ENCODE measurements at regions of chr12 and their contacts with region 1.

Region 1: GRCh38 chr12:111313833-111314259 is 55.0 kb downstream of the PHETA1 start:
- DNase-seq: peak; percentile 87
- H3K4me3 ChIP-seq: no peak overlapping the region
- H3K27ac ChIP-seq: no peak overlapping the region
- H3K4me1 ChIP-seq: no peaks in the 10 kb centered on the region
- H3K27me3 ChIP-seq: no peaks in the 10 kb centered on the region
- CTCF ChIP-seq: peak; percentile 96

Region 2: DNA sequence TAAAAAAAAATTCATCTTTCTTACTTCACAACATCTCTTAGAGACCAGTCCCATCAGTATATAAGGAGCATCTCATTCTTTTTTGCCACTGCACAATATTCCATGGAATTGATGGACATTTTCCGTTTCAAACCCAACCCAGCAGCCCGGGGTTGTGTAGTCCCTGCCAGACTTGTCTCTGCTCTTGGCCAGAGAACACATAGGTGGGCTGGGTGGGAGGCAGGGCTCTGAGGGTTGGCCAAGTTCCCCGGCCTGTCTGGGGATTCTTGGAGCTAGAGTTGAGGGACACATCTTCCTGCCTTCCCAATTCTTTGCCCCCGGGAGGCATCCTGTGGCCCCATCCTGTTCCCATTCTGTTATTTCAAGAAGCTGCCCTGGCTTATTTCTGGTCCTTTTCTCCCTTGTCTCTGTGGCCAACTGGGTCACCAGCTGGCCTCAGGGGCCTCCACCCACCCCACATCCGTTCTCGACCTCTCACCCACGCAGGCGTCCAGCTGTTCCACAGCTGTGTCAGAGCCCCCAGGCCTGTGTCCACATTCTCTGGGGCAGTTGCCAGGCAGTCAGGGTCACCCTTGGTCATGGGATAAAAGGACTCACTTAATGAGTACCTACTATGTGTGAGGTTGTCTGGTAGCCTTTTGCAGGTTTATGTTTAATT is 519.1 kb before region 1 on chr12:
- CTCF ChIA-PET with region 1: no interaction called
- POLR2A ChIA-PET with region 1: no interaction called
- intact Hi-C with region 1: no loop called
- DNase-seq: no peak
- H3K4me3 ChIP-seq: no peak overlapping the region
- H3K27ac ChIP-seq: no peak overlapping the region
- H3K4me1 ChIP-seq: no peaks in the 10 kb centered on the region
- H3K27me3 ChIP-seq: no peaks in the 10 kb centered on the region
- CTCF ChIP-seq: no peak

Region 3: DNA sequence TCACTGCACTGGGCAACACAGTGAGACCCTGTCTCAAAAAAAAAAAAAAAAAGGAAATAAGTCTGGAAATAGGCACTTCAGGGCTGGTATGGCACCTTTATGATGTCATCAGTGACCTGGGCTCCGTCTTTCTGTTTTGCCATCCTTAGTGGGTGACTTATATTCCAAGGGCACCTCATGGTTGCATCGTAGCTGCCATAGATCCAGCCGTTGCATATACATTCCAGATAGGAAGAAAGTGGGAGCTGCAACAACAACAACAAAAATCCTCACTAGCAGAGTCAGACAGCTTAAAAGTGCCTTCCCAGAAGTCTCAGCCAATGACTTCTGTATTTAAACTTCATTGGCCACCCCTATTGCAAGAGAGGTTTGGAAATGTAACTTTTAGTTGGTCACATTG is 419.9 kb before region 1 on chr12:
- CTCF ChIA-PET with region 1: no interaction called
- POLR2A ChIA-PET with region 1: no interaction called
- intact Hi-C with region 1: loop called (anchors 1 kb)
- DNase-seq: no peak
- H3K4me3 ChIP-seq: no peak overlapping the region
- H3K27ac ChIP-seq: no peak overlapping the region
- H3K4me1 ChIP-seq: no peaks in the 10 kb centered on the region
- H3K27me3 ChIP-seq: no peaks in the 10 kb centered on the region
- CTCF ChIP-seq: no peak

Region 4: DNA sequence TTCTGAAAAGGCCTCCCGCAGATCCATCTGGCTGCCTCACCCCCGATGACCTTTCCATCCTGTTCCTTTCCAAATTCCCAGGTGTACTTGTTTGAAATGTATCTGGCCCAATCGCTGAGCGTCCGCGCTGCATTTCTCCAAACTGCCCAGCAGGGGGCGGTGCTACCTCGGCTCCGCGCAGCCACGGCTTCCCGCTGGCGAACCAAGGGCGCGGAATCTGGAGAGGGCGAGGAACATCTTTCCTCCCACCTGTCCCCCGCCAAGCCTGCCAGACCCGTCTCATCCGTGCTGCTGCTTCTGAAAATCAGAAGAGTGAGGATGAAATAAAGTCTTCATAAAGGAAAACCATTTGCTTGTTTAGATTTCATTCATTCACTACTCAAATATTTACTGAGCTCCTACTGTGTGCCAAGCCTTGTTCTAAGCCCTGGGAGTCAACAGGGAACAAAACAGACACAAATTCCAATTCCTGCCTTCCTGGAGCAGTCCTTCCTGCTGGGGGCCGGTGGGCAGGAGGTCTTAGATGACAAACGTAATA is 376.7 kb before region 1 on chr12:
- CTCF ChIA-PET with region 1: no interaction called
- POLR2A ChIA-PET with region 1: no interaction called
- intact Hi-C with region 1: loop called (anchors 1 kb)
- DNase-seq: peak; percentile 72
- H3K4me3 ChIP-seq: no peak overlapping the region
- H3K27ac ChIP-seq: no peak overlapping the region
- H3K4me1 ChIP-seq: no peaks in the 10 kb centered on the region
- H3K27me3 ChIP-seq: no peaks in the 10 kb centered on the region
- CTCF ChIP-seq: peak; percentile 97

Region 5: GRCh38 chr12:110998165-110998564 is 315.7 kb before region 1 on chr12:
- CTCF ChIA-PET with region 1: no interaction called
- POLR2A ChIA-PET with region 1: interaction called, 11 read pairs
- intact Hi-C with region 1: no loop called
- DNase-seq: peak; percentile 16
- H3K4me3 ChIP-seq: no peak overlapping the region
- H3K27ac ChIP-seq: no peak overlapping the region
- H3K4me1 ChIP-seq: no peaks in the 10 kb centered on the region
- H3K27me3 ChIP-seq: no peaks in the 10 kb centered on the region
- CTCF ChIP-seq: no peak

Region 6: DNA sequence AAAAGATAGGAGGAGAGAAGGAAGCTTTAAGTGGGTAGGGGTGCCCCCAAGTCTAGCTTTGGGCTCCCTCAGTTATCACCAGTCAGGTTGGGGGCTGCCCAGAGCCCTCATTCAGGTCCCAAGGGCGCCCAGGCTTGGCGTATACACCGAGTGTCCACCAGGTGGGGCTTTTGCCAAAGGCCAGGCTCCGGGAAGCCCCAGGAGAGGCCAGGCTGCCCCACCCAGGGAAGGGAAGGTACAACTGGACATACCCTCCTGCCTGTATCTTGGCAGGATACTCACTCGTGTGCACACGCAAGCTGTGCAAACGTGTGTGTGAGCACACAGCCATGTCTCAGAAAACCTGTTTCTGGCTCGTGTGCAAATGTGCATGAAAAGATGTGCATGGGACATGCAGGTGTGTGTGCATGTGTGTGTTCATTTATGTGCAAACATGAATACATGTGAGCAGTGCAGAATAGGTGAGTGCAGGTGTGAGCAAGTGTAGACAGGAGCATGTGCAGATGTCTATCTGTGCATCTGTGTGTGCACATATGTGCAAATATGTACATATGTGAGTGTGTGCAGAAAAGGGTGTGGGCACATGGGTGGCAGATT is 289.5 kb before region 1 on chr12:
- CTCF ChIA-PET with region 1: no interaction called
- POLR2A ChIA-PET with region 1: no interaction called
- intact Hi-C with region 1: loop called (anchors 1 kb)
- DNase-seq: peak; percentile 71
- H3K4me3 ChIP-seq: no peak overlapping the region
- H3K27ac ChIP-seq: no peak overlapping the region
- H3K4me1 ChIP-seq: no peaks in the 10 kb centered on the region
- H3K27me3 ChIP-seq: no peaks in the 10 kb centered on the region
- CTCF ChIP-seq: peak; percentile 89

Region 7: DNA sequence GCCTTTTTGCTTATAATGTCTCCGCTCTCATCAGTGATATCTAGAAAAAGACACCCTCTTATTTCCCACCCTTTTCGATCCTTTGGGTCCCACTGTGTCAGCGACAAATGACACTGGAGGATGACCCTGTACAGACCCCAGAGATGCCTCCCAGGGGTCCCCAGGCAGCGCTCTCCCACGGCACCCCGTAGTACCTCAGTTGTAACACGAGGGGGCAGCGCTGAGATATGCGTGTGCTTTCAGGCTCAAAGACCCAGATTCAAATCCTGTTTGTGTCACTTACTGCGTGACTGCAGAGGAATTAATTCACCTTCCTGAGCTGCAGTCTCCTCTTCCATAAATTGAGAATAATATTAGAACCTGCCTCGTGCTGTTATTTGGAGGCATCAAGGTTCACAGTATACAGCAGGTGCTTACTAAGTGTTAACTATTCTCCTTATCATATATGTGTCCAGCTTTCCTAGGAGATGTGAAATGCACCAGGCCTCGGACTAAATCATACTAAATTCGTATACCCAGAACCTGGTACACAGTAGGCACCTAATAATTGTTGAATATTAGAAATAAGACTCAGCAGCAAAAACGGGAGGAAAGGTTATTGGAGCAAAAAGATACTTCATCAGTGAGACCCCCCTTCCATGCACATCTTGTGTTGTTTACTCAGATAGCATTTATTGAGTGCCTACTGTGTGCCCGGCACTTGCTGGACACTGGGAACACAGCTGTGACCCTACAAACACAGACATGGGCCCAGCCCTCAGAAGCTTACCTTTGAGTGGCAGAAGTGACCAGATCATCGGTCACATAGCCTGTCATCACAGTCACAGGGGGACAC is 44.9 kb before region 1 on chr12:
- CTCF ChIA-PET with region 1: no interaction called
- POLR2A ChIA-PET with region 1: no interaction called
- intact Hi-C with region 1: no loop called
- DNase-seq: peak; percentile 28
- H3K4me3 ChIP-seq: no peak overlapping the region
- H3K27ac ChIP-seq: no peak overlapping the region
- H3K4me1 ChIP-seq: peaks cover 7% of the 10 kb centered on the region
- H3K27me3 ChIP-seq: no peaks in the 10 kb centered on the region
- CTCF ChIP-seq: peak; percentile 73

Region 8: GRCh38 chr12:111330800-111331752 is 17.2 kb after region 1 on chr12:
- CTCF ChIA-PET with region 1: interaction called, 10 read pairs
- POLR2A ChIA-PET with region 1: no interaction called
- intact Hi-C with region 1: no loop called
- DNase-seq: peak; percentile 83
- H3K4me3 ChIP-seq: no peak overlapping the region
- H3K27ac ChIP-seq: no peak overlapping the region
- H3K4me1 ChIP-seq: no peaks in the 10 kb centered on the region
- H3K27me3 ChIP-seq: no peaks in the 10 kb centered on the region
- CTCF ChIP-seq: peak; percentile 62